Transverse colon (tissue), 4 donors: ENCODE measurements at regions of chr9 and their contacts with region 1.

Region 1: GRCh38 chr9:107472581-107473340 is 16.8 kb downstream of the KLF4 start:
- DNase-seq: no peak
- H3K4me3 ChIP-seq: no peak overlapping the region
- H3K27ac ChIP-seq: no peak overlapping the region
- H3K4me1 ChIP-seq: no peaks in the 10 kb centered on the region
- H3K27me3 ChIP-seq: no peaks in the 10 kb centered on the region
- CTCF ChIP-seq: no peak
- EP300 ChIP-seq: no peak
- POLR2A ChIP-seq: no peak

Region 2: DNA sequence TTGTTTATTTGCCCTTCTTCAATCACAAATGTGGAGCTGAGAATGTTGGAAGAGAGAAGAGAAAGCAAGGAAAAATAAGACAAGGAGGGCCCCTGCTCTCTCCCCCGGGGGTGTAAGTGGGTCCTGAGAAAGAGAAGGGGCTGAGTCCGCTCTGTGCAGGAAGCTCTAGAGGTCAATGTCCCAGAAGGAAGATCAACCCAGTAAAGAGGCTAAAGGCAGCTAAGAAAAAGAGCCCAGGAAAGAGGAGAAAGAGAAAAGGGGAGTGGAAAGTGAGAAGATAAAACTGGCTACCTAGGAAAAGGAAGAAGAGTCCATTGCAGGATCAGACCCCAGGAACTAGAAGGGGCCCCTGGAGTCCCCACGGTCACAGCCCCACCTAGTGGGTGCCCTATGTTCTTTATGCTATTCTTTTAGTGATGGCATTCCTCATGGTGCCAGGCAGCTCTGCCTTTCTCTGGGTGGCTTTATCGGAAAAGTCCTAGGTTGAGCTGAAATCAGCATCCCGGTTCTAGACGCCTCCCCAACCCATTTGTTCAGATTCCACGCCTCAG is 799.7 kb after region 1 on chr9:
- in situ Hi-C with region 1: loop called (anchors 10 to 25 kb)
- intact Hi-C with region 1: no loop called
- DNase-seq: peak; percentile 66
- H3K4me3 ChIP-seq: peak overlapping the region in 3 of 4 donors; percentile 10 to 46 (median 29)
- H3K27ac ChIP-seq: peak overlapping the region; percentile 75 to 90 (median 83)
- H3K4me1 ChIP-seq: peaks cover 7 to 28% (median 22%) of the 10 kb centered on the region in 4 donors
- H3K27me3 ChIP-seq: no peaks in the 10 kb centered on the region
- CTCF ChIP-seq: peak; percentile 52 to 81 (median 60)
- EP300 ChIP-seq: no peak
- POLR2A ChIP-seq: peak; percentile 22